ENCODE measurements at regions of chr15 and their contacts with region 1.

Region 1: GRCh38 chr15:89958074-89958805 is 42.9 kb upstream of the ZNF710 start:
- DNase-seq: peak; percentile 83
- H3K4me3 Mint-ChIP-seq: peak overlapping the region; percentile 14
- H3K27ac Mint-ChIP-seq: peak overlapping the region; percentile 90
- H3K4me1 Mint-ChIP-seq: peaks cover 15% of the 10 kb centered on the region
- H3K27me3 Mint-ChIP-seq: no peaks in the 10 kb centered on the region
- CTCF ChIP-seq: no peak

Region 2: GRCh38 chr15:89243691-89244471 is 714.4 kb before region 1 on chr15 and contains the start of gene FANCI:
- CTCF ChIA-PET with region 1: no interaction called
- POLR2A ChIA-PET with region 1: no interaction called
- intact Hi-C with region 1: no loop called
- DNase-seq: peak; percentile 94
- H3K4me3 Mint-ChIP-seq: peak within 1 kb of the TSS; percentile 95
- H3K27ac Mint-ChIP-seq: peak within 1 kb of the TSS; percentile 93
- H3K4me1 Mint-ChIP-seq: peaks cover 31% of the 10 kb centered on the region
- H3K27me3 Mint-ChIP-seq: peaks cover 6% of the 10 kb centered on the region
- CTCF ChIP-seq: no peak
- total RNA-seq, gene FANCI: 24.0 and 34.0 TPM in 2 replicates

Region 3: GRCh38 chr15:89912674-89913396 is 45.4 kb before region 1 on chr15 and contains the start of gene ARPIN:
- CTCF ChIA-PET with region 1: interaction called, 7 read pairs
- POLR2A ChIA-PET with region 1: interaction called, 21 read pairs
- intact Hi-C with region 1: no loop called
- DNase-seq: peak; percentile 52
- H3K4me3 Mint-ChIP-seq: peak within 1 kb of the TSS; percentile 76
- H3K27ac Mint-ChIP-seq: no peak within 1 kb of the TSS
- H3K4me1 Mint-ChIP-seq: peaks cover 27% of the 10 kb centered on the region
- H3K27me3 Mint-ChIP-seq: no peaks in the 10 kb centered on the region
- CTCF ChIP-seq: no peak
- total RNA-seq, gene ARPIN: 7.1 and 9.9 TPM in 2 replicates

Region 4: GRCh38 chr15:89971592-89971997 is 13.4 kb after region 1 on chr15:
- CTCF ChIA-PET with region 1: interaction called, 7 read pairs
- POLR2A ChIA-PET with region 1: interaction called, 10 read pairs
- intact Hi-C with region 1: no loop called
- DNase-seq: peak; percentile 76
- H3K4me3 Mint-ChIP-seq: no peak overlapping the region
- H3K27ac Mint-ChIP-seq: no peak overlapping the region
- H3K4me1 Mint-ChIP-seq: no peaks in the 10 kb centered on the region
- H3K27me3 Mint-ChIP-seq: no peaks in the 10 kb centered on the region
- CTCF ChIP-seq: peak; percentile 52